ENCODE measurements at regions of chr7 and their contacts with region 1.

Region 1: DNA sequence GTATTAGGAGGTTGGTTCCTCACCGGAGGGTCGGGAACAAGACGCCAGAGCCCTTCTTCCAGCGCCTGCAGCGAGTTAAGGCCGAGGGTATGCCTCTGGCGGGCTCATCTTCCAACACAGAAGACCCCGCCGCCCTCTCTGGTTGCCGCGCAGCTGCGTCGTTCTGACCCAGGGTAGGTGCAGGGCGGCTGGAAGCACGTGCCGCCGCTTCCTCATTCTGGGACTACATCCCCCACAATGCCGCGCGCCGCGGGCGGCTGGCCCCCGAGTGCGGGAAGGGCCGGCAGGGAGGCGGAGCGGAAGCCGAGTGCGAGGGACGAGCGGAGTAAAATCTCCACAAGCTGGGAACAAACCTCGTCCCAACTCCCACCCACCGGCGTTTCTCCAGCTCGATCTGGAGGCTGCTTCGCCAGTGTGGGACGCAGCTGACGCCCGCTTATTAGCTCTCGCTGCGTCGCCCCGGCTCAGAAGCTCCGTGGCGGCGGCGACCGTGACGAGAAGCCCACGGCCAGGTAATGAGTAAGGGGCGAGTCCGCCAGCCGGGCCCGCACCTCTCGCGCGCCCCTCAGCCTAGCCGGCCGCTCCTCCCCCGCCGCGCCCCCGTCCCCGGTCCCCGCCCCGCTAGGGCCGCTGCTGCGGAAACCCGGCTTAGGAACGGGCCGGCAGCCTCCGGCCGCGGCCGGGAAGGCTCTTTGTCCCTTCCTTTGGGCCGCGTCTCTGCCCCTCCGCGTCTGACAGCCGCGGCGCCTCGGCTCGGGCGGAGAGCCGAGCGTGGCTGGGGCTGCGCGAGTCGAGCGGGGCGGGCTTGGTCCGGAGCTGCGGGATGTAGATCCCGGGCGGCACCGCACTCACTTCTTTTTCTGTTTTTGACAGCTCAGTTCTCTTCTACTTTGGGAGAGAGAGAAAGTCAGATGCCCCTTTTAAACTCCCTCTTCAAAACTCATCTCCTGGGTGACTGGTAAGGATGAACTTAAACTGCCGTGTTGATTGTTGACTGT is at the start of gene CCDC126:
- DNase-seq: peak; percentile 57 to 88 (median 81)
- ATAC-seq: peak; percentile 89
- H3K4me3 ChIP-seq: peak within 1 kb of the TSS; percentile 81 to 91
- H3K4me3 Mint-ChIP-seq: peak within 1 kb of the TSS; percentile 85
- H3K27ac ChIP-seq: peak within 1 kb of the TSS; percentile 55 to 63
- H3K27ac Mint-ChIP-seq: peak within 1 kb of the TSS; percentile 49
- H3K4me1 ChIP-seq: peaks cover 21% of the 10 kb centered on the region
- H3K4me1 Mint-ChIP-seq: peaks cover 34% of the 10 kb centered on the region
- H3K27me3 ChIP-seq: no peaks in the 10 kb centered on the region
- H3K27me3 Mint-ChIP-seq: no peaks in the 10 kb centered on the region
- CTCF ChIP-seq: no peak
- total RNA-seq, gene CCDC126: 10.8 to 11.9 TPM

Region 2: DNA sequence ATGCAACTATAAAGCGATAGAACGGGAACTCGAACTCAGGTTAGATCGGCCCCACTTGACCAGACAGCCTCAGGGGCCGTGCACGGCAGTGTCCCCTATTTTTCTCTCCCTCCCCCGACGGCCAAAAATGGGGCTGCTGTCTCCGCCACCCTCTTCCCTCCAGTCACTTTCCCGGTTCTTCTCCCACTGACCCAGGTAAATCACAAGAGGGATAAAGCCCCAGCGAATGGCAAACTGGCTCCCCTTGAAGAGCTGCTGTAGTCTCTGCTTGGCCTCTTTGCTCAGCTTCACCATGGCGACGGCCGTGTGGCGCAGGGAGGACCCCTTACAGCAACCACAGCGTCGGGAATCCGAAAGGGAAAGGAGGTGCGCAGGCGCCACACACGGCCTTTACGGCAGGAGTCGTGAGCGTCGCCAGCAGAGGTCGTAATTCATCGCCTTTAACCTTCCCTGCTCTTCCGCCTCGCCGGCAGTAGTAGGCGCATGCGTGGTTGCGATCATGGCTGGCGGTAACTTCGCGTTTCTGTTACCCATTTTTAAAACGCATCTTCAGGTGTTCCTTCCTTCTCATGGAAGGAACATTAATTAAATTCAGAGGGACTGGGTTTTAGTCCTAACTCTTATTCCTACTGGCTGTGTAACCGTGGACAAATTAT is 774.8 kb before region 1 on chr7 and contains the start of gene TOMM7:
- CTCF ChIA-PET with region 1: no interaction called
- POLR2A ChIA-PET with region 1: no interaction called
- intact Hi-C with region 1: loop called in 1 of 2 experiments (anchors 10 kb)
- DNase-seq: peak; percentile 72 to 99 (median 86)
- ATAC-seq: peak; percentile 96
- H3K4me3 ChIP-seq: peak within 1 kb of the TSS; percentile 74 to 89
- H3K4me3 Mint-ChIP-seq: peak within 1 kb of the TSS; percentile 99
- H3K27ac ChIP-seq: peak within 1 kb of the TSS; percentile 85
- H3K27ac Mint-ChIP-seq: peak within 1 kb of the TSS; percentile 99
- H3K4me1 ChIP-seq: peaks cover 20% of the 10 kb centered on the region
- H3K4me1 Mint-ChIP-seq: peaks cover 41% of the 10 kb centered on the region
- H3K27me3 ChIP-seq: no peaks in the 10 kb centered on the region
- H3K27me3 Mint-ChIP-seq: peaks cover 4% of the 10 kb centered on the region
- CTCF ChIP-seq: no peak
- total RNA-seq, gene TOMM7: 595 to 610 TPM

Region 3: GRCh38 chr7:22854158-22855048 is 743.0 kb before region 1 on chr7:
- CTCF ChIA-PET with region 1: no interaction called
- POLR2A ChIA-PET with region 1: no interaction called
- intact Hi-C with region 1: loop called in 1 of 2 experiments (anchors 10 kb)
- DNase-seq: peak in 8 of 9 experiments; percentile 58 to 89 (median 76)
- ATAC-seq: peak; percentile 79
- H3K4me3 ChIP-seq: peak overlapping the region; percentile 82 to 94
- H3K4me3 Mint-ChIP-seq: peak overlapping the region; percentile 93
- H3K27ac ChIP-seq: peak overlapping the region; percentile 64 to 81
- H3K27ac Mint-ChIP-seq: peak overlapping the region; percentile 93
- H3K4me1 ChIP-seq: peaks cover 11% of the 10 kb centered on the region
- H3K4me1 Mint-ChIP-seq: peaks cover 23% of the 10 kb centered on the region
- H3K27me3 ChIP-seq: no peaks in the 10 kb centered on the region
- H3K27me3 Mint-ChIP-seq: no peaks in the 10 kb centered on the region
- CTCF ChIP-seq: peak; percentile 65

Region 4: GRCh38 chr7:23679898-23680413 is 82.6 kb after region 1 on chr7 and contains the start of gene FAM221A:
- CTCF ChIA-PET with region 1: no interaction called
- POLR2A ChIA-PET with region 1: interaction called, 9 read pairs
- intact Hi-C with region 1: loop called (anchors 1 kb)
- DNase-seq: peak; percentile 55 to 90 (median 80)
- ATAC-seq: peak; percentile 97
- H3K4me3 ChIP-seq: peak within 1 kb of the TSS; percentile 49 to 71
- H3K4me3 Mint-ChIP-seq: peak within 1 kb of the TSS; percentile 96
- H3K27ac ChIP-seq: peak within 1 kb of the TSS; percentile 3 to 18
- H3K27ac Mint-ChIP-seq: peak within 1 kb of the TSS; percentile 79
- H3K4me1 ChIP-seq: peaks cover 3% of the 10 kb centered on the region
- H3K4me1 Mint-ChIP-seq: peaks cover 18% of the 10 kb centered on the region
- H3K27me3 ChIP-seq: no peaks in the 10 kb centered on the region
- H3K27me3 Mint-ChIP-seq: no peaks in the 10 kb centered on the region
- CTCF ChIP-seq: peak; percentile 73
- total RNA-seq, gene FAM221A: 2.4 to 3.0 TPM

Region 5: DNA sequence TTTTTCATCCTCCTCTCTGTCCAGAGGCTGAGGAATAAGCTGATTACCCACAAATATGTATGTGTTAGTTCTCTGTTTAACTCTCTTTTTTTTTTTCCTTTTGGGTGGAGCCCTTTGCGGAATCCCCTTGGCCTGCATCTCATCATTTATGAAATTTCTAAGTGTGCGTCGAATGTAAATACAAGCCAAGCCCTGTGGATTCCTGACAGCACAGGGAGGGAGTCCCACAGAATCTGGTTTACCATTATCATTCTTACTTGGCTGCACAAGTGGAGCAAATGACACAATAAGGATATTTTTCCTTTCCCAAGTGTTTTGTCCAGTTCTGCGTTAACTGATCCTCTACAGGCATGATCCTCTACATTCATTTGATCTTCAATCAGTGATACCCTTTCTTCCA is 124.1 kb after region 1 on chr7:
- CTCF ChIA-PET with region 1: no interaction called
- POLR2A ChIA-PET with region 1: no interaction called
- intact Hi-C with region 1: no loop called
- DNase-seq: no peak
- ATAC-seq: no peak
- H3K4me3 ChIP-seq: no peak overlapping the region
- H3K4me3 Mint-ChIP-seq: no peak overlapping the region
- H3K27ac ChIP-seq: no peak overlapping the region
- H3K27ac Mint-ChIP-seq: peak overlapping the region; percentile 15
- H3K4me1 ChIP-seq: no peaks in the 10 kb centered on the region
- H3K4me1 Mint-ChIP-seq: no peaks in the 10 kb centered on the region
- H3K27me3 ChIP-seq: no peaks in the 10 kb centered on the region
- H3K27me3 Mint-ChIP-seq: no peaks in the 10 kb centered on the region
- CTCF ChIP-seq: no peak

Region 6: DNA sequence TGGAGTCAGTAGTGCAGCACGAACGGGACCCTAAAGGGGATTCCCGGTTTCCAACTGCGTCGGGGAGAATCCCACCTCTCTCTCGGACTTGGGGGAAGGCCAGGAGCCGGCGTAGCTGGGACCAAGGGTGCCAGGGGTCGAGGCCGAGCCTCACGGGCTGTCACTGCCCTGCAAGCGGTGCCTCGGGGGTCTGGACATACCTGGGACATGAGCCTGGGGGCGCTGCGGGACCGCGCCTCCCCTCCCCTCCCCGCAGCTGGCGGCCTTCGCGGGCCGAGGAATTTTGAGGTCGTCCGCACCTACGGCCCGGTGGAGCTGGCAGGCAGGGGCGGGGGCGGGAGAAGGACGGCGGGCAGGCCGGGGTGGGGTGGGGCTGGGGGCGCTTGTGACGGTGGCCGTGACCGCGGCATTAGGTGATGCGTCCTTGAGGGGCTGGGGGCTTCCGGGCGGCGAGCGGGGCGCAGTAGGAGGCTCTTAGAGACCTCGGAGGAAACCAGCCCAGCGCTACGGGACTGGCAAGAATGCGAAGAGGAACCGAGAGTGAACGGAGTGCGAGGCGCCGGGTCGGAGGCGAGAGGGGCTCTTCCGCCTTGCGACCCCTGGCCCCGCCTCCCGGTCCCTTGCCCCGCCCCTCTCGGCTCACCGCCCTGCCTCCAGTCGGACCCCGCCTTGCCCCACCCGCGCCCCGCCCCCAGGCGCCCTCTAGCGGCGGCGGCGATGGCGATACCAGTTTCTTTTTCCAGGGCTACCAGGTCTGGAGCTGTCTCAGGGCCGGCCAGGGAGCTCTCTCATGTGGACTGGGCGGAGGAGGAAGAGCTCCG is 1582.6 kb after region 1 on chr7:
- CTCF ChIA-PET with region 1: no interaction called
- POLR2A ChIA-PET with region 1: interaction called, 3 read pairs
- intact Hi-C with region 1: loop called (anchors 2 kb)
- DNase-seq: peak; percentile 92 to 99 (median 95)
- ATAC-seq: peak; percentile 98
- H3K4me3 ChIP-seq: peak overlapping the region; percentile 64 to 70
- H3K4me3 Mint-ChIP-seq: peak overlapping the region; percentile 91
- H3K27ac ChIP-seq: peak overlapping the region; percentile 57 to 83
- H3K27ac Mint-ChIP-seq: peak overlapping the region; percentile 92
- H3K4me1 ChIP-seq: peaks cover 7% of the 10 kb centered on the region
- H3K4me1 Mint-ChIP-seq: peaks cover 22% of the 10 kb centered on the region
- H3K27me3 ChIP-seq: no peaks in the 10 kb centered on the region
- H3K27me3 Mint-ChIP-seq: peaks cover under 1% of the 10 kb centered on the region
- CTCF ChIP-seq: peak; percentile 91